ENCODE measurements at regions of chr2 and their contacts with region 1.

Region 1: GRCh38 chr2:73828818-73829570 is at the start of gene STAMBP:
- DNase-seq: peak; percentile 98
- ATAC-seq: peak; percentile 98
- H3K4me3 ChIP-seq: peak within 1 kb of the TSS; percentile 66 to 95 (median 85)
- H3K27ac ChIP-seq: peak within 1 kb of the TSS; percentile 64
- H3K4me1 ChIP-seq: peaks cover 39% of the 10 kb centered on the region
- H3K27me3 ChIP-seq: no peaks in the 10 kb centered on the region; a peak in 1 of 5 replicates
- CTCF ChIP-seq: 0 out of 2 replicates have a peak, but pooled peaks have one; percentile 24
- EP300 ChIP-seq: 0 out of 4 replicates have a peak, but pooled peaks of 1 of the 2 experiments have one; percentile 9
- POLR2A ChIP-seq: peak; percentile 76 to 96
- RAD21 ChIP-seq: no peak; the same call in 1 of the 2 replicates
- total RNA-seq, gene STAMBP: 53.2 and 85.0 TPM in 2 replicates

Region 2: GRCh38 chr2:73839652-73840411 is 10.8 kb after region 1 on chr2:
- CTCF ChIA-PET with region 1: interaction called, 4 read pairs
- POLR2A ChIA-PET with region 1: interaction called, 59 read pairs
- in situ Hi-C with region 1: no loop called
- intact Hi-C with region 1: no loop called
- DNase-seq: no peak
- ATAC-seq: no peak
- H3K4me3 ChIP-seq: no peak overlapping the region
- H3K27ac ChIP-seq: no peak overlapping the region
- H3K4me1 ChIP-seq: peaks cover 26% of the 10 kb centered on the region
- H3K27me3 ChIP-seq: no peaks in the 10 kb centered on the region
- CTCF ChIP-seq: 0 out of 2 replicates have a peak, but pooled peaks have one; percentile 19
- EP300 ChIP-seq: no peak
- POLR2A ChIP-seq: no peak
- RAD21 ChIP-seq: no peak

Region 3: DNA sequence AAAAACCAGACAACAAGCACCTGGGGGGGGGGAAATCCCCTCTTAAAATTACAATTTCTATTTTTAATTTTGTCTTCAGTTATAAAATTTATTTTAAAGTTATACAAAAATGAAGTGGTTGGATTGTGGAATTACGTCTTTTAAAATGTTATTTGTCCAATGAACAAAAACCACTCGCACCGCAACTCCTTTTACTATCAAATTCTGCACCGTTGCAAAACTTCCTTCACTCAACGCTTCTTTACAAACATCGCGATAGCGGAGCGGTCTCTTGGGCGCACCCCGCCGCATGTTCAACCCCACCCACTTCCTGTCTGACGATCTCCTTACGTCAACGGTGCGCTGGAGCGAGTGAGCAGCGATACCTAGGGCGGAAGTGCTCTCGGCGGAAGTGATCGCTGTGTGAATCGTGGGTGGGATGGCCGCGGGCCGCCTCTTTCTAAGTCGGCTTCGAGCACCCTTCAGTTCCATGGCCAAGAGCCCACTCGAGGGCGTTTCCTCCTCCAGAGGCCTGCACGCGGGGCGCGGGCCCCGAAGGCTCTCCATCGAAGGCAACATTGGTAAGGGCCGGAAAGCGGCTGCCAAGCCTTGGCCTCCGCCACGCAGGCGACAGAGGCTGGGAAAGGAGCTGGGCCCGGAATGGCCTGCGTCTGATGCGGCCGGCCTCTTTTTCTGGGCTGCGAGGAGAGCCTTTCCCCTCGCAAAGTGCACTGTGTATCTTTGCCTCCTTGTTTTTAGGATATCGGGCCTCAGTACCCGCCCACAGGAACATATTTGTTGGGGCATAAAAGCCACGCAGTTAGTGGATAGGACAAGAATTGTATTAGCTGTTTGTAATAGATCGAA is 97.7 kb after region 1 on chr2 and contains the start of gene DGUOK:
- CTCF ChIA-PET with region 1: no interaction called
- POLR2A ChIA-PET with region 1: interaction called, 23 read pairs
- in situ Hi-C with region 1: no loop called
- intact Hi-C with region 1: loop called (anchors 2 kb)
- DNase-seq: peak; percentile 99
- ATAC-seq: peak; percentile 99
- H3K4me3 ChIP-seq: peak within 1 kb of the TSS; percentile 76 to 91 (median 82)
- H3K27ac ChIP-seq: peak within 1 kb of the TSS; percentile 78
- H3K4me1 ChIP-seq: peaks cover 44% of the 10 kb centered on the region
- H3K27me3 ChIP-seq: peaks cover 0 to 5% of the 10 kb centered on the region in 2 experiments; a peak in 2 of 5 replicates
- CTCF ChIP-seq: no peak
- EP300 ChIP-seq: peak; percentile 49 to 64; a peak in 2 of 4 replicates
- POLR2A ChIP-seq: peak; percentile 95 to 97
- RAD21 ChIP-seq: peak; percentile 69
- total RNA-seq, gene DGUOK: 105 and 130 TPM in 2 replicates

Region 4: GRCh38 chr2:74119912-74120825 is 291.2 kb after region 1 on chr2:
- CTCF ChIA-PET with region 1: interaction called, 3 read pairs
- POLR2A ChIA-PET with region 1: interaction called, 19 read pairs
- in situ Hi-C with region 1: loop called (anchors 25 kb)
- intact Hi-C with region 1: no loop called
- DNase-seq: peak; percentile 78
- ATAC-seq: peak; percentile 99
- H3K4me3 ChIP-seq: peak overlapping the region; percentile 79 to 91 (median 91)
- H3K27ac ChIP-seq: peak overlapping the region; percentile 83
- H3K4me1 ChIP-seq: peaks cover 14% of the 10 kb centered on the region
- H3K27me3 ChIP-seq: no peaks in the 10 kb centered on the region
- CTCF ChIP-seq: peak; percentile 93
- EP300 ChIP-seq: 0 out of 4 replicates have a peak, but pooled peaks of 1 of the 2 experiments have one; percentile 18
- POLR2A ChIP-seq: peak; percentile 16 to 63; a peak in 3 of 4 replicates
- RAD21 ChIP-seq: peak; percentile 84

Region 5: GRCh38 chr2:74147727-74148456 is 318.9 kb after region 1 on chr2 and contains the start of gene BOLA3:
- CTCF ChIA-PET with region 1: interaction called, 10 read pairs
- POLR2A ChIA-PET with region 1: interaction called, 7 read pairs
- in situ Hi-C with region 1: loop called (anchors 25 kb)
- intact Hi-C with region 1: loop called (anchors 1 kb)
- DNase-seq: peak; percentile 78
- ATAC-seq: peak; percentile 94
- H3K4me3 ChIP-seq: peak within 1 kb of the TSS; percentile 84 to 95 (median 94)
- H3K27ac ChIP-seq: peak within 1 kb of the TSS; percentile 72
- H3K4me1 ChIP-seq: peaks cover 33% of the 10 kb centered on the region
- H3K27me3 ChIP-seq: no peaks in the 10 kb centered on the region; a peak in 1 of 5 replicates
- CTCF ChIP-seq: peak; percentile 84
- EP300 ChIP-seq: peak in 1 of 2 experiments; percentile 17; a peak in 2 of 4 replicates
- POLR2A ChIP-seq: peak; percentile 92 to 96
- RAD21 ChIP-seq: peak; percentile 82
- total RNA-seq, gene BOLA3: 170 and 172 TPM in 2 replicates

Region 6: GRCh38 chr2:74178201-74179062 is 349.4 kb after region 1 on chr2 and contains the start of gene MOB1A:
- CTCF ChIA-PET with region 1: no interaction called
- POLR2A ChIA-PET with region 1: interaction called, 23 read pairs
- in situ Hi-C with region 1: no loop called
- intact Hi-C with region 1: no loop called
- DNase-seq: peak; percentile 98
- ATAC-seq: peak; percentile 98
- H3K4me3 ChIP-seq: peak within 1 kb of the TSS; percentile 66 to 91 (median 82)
- H3K27ac ChIP-seq: peak within 1 kb of the TSS; percentile 96
- H3K4me1 ChIP-seq: peaks cover 43% of the 10 kb centered on the region
- H3K27me3 ChIP-seq: no peaks in the 10 kb centered on the region; a peak in 1 of 5 replicates
- CTCF ChIP-seq: no peak; the same call in 1 of the 2 replicates
- EP300 ChIP-seq: no peak
- POLR2A ChIP-seq: peak; percentile 88 to 92; a peak in 3 of 4 replicates
- RAD21 ChIP-seq: peak; percentile 56
- total RNA-seq, gene MOB1A: 139 and 217 TPM in 2 replicates

Region 7: GRCh38 chr2:74261204-74261864 is 432.3 kb after region 1 on chr2:
- CTCF ChIA-PET with region 1: no interaction called
- POLR2A ChIA-PET with region 1: no interaction called
- in situ Hi-C with region 1: no loop called
- intact Hi-C with region 1: loop called (anchors 1 kb)
- DNase-seq: peak; percentile 67
- ATAC-seq: peak; percentile 79
- H3K4me3 ChIP-seq: no peak overlapping the region
- H3K27ac ChIP-seq: no peak overlapping the region
- H3K4me1 ChIP-seq: peaks cover 9% of the 10 kb centered on the region; the same call in 1 of the 2 replicates
- H3K27me3 ChIP-seq: peaks cover 3 to 19% of the 10 kb centered on the region in 2 experiments; a peak in 3 of 5 replicates
- CTCF ChIP-seq: peak; percentile 79
- EP300 ChIP-seq: no peak
- POLR2A ChIP-seq: no peak
- RAD21 ChIP-seq: peak; percentile 45; the same call in 1 of the 2 replicates

Measured in HepG2 (cell line).